Prostate gland (tissue), 2 donors: ENCODE measurements at regions of chr7 and their contacts with region 1.

Region 1: DNA sequence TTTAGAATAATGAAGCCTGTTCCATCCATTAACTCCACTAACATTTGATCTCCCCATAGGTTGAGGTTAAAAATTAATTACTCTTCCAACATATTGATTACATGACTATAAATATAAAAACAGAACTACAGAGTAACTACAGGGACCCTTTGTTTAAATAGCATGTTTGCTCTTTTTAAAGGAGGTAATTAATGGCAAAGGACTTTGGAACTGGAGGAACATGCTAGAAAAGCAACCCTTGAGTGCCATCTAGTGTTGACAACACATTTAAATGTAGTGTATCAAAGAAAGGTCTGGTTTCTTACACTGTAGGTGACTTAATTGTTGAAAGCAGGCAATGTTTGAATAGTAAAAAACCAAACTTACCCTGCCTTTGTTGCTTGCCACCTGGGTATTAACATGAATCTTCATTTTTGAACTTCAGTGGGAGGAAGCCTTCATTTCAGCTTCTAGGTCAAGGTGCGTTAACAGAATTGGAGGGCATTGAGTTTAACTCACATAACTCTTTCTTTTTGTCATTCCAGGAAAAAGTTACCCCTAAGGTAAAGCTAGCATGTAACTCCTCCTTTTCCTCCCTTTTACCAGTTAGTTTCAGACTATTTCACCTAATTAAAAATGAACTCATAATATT is 52.6 kb upstream of the CAPZA2 start:
- DNase-seq: peak; percentile 54
- H3K4me3 ChIP-seq: no peak overlapping the region
- H3K27ac ChIP-seq: no peak overlapping the region
- H3K4me1 ChIP-seq: no peaks in the 10 kb centered on the region
- H3K27me3 ChIP-seq: no peaks in the 10 kb centered on the region
- CTCF ChIP-seq: peak; percentile 34 to 83 (median 72)
- POLR2A ChIP-seq: no peak

Region 2: DNA sequence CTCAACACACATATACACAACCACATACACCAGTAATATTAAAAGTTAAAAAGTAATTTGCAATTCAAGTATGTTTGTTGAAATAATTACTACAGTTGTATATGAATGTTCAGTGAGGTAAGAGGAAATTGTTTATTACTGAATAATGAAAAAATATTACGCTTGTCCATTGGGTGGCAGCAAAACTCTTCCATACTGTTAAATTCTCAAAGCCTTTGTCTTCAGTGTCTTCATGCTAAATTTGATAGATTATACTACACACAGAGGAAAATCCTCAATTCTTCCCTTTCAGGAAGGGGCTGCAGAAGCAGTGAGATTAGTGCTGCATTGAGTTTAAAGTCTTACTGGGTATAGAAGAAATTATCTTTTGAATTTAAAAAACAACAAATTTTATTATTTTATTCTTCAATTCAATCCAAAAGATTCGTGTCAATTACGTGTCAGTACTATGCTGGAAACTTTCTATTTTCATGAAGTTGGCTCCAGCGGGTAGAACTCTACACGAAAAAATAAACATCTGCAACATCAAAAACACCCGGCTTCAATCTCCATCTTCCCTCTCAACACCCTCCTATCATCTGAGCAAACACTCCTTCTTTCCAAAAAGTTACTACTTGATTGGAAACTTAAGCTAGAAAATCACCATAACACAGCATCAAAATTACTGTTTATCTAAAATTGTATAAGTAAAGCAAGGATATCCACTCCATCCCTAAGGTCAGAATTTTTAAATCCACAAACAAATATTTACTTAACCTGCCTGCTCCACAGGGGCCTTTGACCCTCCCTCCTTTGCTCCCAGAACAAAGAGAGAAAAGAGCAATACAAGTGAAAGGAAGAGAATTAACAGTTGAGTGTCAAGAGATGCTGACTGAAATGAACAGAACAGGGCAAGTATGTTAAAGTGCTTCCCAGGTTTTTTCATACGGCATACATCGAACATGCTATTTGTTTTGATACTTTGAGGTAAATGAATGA is 636.4 kb before region 1 on chr7:
- intact Hi-C with region 1: loop called (anchors 2 kb)
- DNase-seq: peak; percentile 30
- H3K4me3 ChIP-seq: no peak overlapping the region
- H3K27ac ChIP-seq: no peak overlapping the region
- H3K4me1 ChIP-seq: no peaks in the 10 kb centered on the region
- H3K27me3 ChIP-seq: no peaks in the 10 kb centered on the region
- CTCF ChIP-seq: peak; percentile 17 to 80 (median 57)
- POLR2A ChIP-seq: no peak

Region 3: DNA sequence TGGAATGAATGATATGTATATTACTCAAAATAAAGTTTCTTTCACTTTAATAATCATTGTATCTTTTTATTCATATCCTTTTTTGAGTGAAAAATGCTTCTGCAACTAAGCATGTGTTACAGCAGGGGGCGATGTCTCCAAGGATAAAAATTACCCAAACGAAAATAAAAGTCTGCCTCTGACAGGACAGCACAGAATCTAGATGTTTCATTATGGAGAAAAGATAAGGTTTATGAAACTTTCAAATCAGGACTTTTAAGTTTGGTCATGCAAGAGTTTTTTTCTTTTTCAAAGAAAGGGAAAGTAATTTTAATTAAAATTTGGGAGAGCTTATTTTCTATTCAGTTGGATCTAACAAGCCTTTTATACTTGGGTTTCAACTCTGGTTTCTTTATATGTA is 551.0 kb before region 1 on chr7:
- intact Hi-C with region 1: loop called (anchors 5 kb)
- DNase-seq: peak; percentile 23
- H3K4me3 ChIP-seq: no peak overlapping the region
- H3K27ac ChIP-seq: no peak overlapping the region
- H3K4me1 ChIP-seq: no peaks in the 10 kb centered on the region
- H3K27me3 ChIP-seq: no peaks in the 10 kb centered on the region
- CTCF ChIP-seq: peak; percentile 31 to 90 (median 84)
- POLR2A ChIP-seq: no peak

Region 4: DNA sequence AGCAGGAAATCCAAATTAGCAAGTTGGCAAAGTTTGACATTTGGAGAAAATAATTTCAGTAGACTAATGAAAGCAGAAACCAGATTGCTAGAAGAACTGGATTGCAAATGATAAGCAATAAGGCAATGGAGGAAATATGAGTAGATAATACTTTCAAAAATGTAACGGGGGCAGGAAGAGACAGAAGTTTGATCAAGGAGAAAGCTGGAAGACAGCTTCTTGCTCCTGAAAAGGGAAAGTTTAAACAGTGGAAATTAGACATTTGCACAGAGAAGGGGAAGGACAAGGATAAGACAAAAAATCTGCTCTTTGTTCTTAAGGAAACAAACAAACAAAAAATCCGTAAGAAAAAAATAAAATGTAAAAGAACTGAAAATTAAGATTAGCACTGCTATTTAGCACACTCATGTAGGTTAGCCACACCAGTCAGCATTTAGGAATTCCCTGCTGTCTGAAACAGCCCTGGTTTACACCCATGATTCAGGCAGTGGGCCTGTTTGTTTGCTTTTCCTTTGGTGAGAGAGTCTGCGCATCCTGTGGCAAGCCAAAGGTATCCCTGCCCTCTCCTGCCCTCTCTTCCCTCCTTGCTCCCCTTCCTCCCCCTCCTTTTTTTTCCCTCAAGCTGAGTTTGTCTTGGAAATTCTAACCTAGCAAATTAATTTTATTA is 414.5 kb before region 1 on chr7:
- intact Hi-C with region 1: no loop called
- DNase-seq: no peak
- H3K4me3 ChIP-seq: no peak overlapping the region
- H3K27ac ChIP-seq: no peak overlapping the region
- H3K4me1 ChIP-seq: no peaks in the 10 kb centered on the region
- H3K27me3 ChIP-seq: no peaks in the 10 kb centered on the region
- CTCF ChIP-seq: no peak
- POLR2A ChIP-seq: no peak

Region 5: GRCh38 chr7:116671681-116672595 is 137.8 kb before region 1 on chr7 and contains the start of gene MET:
- intact Hi-C with region 1: loop called (anchors 5 kb)
- DNase-seq: peak; percentile 82
- H3K4me3 ChIP-seq: peak within 1 kb of the TSS; percentile 46 to 50
- H3K27ac ChIP-seq: peak within 1 kb of the TSS; percentile 68 to 73
- H3K4me1 ChIP-seq: no peaks in the 10 kb centered on the region
- H3K27me3 ChIP-seq: no peaks in the 10 kb centered on the region
- CTCF ChIP-seq: peak; percentile 17 to 83 (median 58)
- POLR2A ChIP-seq: peak; percentile 68
- total RNA-seq, gene MET: 14.2 to 17.0 TPM

Region 6: DNA sequence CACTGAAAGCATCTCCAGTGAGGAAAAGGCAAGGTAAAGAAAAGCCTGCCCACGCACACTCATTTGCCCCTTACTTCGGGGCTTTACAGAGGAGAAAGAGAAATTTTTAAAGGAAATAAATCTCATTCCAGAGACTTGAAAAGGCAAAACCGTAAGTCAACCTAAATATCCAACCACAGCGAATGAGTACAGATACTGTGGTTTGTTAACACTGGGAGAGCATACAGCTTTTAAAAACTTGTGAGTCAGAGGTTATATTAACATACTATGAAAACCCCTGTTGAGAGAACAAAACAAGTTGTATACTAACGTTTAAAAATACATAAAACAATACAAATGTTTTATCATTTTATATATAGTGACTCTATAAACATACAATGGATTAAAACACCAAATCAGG is 115.0 kb after region 1 on chr7:
- intact Hi-C with region 1: no loop called
- DNase-seq: no peak
- H3K4me3 ChIP-seq: no peak overlapping the region
- H3K27ac ChIP-seq: no peak overlapping the region
- H3K4me1 ChIP-seq: no peaks in the 10 kb centered on the region
- H3K27me3 ChIP-seq: no peaks in the 10 kb centered on the region
- CTCF ChIP-seq: no peak
- POLR2A ChIP-seq: no peak